Gastrocnemius medialis (tissue), 4 donors: ENCODE measurements at regions of chr16 and their contacts with region 1.

Region 1: DNA sequence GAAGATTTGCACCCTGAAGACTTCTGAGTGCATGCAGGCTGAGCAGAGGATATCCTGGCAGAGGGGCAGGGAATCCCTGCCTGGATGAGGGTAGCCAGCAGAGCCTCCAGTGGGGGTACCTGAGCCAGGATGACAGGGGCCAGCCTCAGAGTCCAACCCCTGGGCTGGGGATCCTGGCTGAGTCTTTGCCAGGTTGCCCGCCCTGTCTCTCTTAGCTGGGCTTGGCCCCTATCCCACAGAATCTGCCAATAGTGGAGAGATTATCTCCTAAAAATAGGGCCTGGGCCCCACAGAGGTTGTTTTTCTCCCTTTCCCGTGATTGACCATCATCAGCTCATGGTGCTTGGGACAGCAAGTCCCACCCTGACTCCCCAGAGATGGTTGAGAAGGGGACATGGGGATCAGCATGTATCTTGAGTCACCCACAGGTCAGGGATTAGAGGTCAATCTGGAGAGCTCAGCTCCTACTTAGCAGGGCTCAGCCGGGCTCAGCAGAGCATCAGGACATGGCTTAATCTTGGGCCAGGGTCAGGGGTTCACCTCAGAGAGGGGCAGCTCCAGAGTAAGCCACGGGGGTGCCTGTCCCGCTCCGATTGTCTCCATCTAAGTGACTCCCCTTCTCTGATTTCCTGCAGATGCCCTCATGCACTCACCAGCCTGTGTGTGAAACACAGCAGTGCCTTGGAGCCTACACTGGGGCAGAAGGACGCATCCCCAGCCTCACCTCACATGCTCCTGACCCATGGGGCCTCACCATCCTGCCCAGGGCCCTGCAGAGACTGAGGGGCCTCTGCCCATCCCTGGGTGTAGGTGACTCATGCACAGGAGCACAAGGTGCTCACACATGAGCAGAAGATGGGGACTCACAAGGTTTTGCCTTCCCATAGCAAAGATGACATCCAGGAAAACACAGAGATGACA is 11.5 kb downstream of the CDH16 start:
- DNase-seq: no peak
- ATAC-seq: no peak
- H3K4me3 ChIP-seq: no peak overlapping the region
- H3K27ac ChIP-seq: peak overlapping the region in 1 of 4 donors; percentile 95
- H3K4me1 ChIP-seq: peaks cover 29 to 34% of the 10 kb centered on the region in 2 donors
- H3K27me3 ChIP-seq: no peaks in the 10 kb centered on the region
- CTCF ChIP-seq: no peak
- POLR2A ChIP-seq: no peak

Region 2: DNA sequence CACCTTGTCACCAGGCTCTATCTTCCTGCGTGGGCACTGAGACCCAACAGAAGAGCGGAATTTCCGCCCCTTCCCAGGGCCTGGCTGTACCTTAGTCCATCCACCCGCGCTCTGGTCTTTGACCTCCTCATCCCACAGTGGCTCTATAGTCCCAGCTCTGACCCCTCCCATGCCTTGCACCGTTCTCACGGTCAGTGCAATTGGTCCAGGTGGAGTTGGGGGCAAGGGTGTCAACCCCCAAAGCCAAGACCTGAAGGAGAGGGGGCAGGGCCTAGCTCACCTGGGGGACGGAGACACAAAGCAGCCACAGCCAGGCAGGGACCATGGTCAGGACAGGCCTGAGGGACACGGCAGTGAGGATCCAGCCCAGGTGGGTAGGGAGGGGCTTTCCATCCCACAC is 10.6 kb after region 1 on chr16:
- in situ Hi-C with region 1: no loop called
- intact Hi-C with region 1: loop called (anchors 1 kb)
- DNase-seq: no peak
- ATAC-seq: no peak
- H3K4me3 ChIP-seq: no peak overlapping the region
- H3K27ac ChIP-seq: peak overlapping the region; percentile 91 to 99 (median 96)
- H3K4me1 ChIP-seq: peaks cover 33 to 34% of the 10 kb centered on the region in 2 donors
- H3K27me3 ChIP-seq: no peaks in the 10 kb centered on the region
- CTCF ChIP-seq: no peak
- POLR2A ChIP-seq: no peak